Heart left ventricle (tissue), 16 donors: ENCODE measurements at regions of chr3 and their contacts with region 1.

Region 1: DNA sequence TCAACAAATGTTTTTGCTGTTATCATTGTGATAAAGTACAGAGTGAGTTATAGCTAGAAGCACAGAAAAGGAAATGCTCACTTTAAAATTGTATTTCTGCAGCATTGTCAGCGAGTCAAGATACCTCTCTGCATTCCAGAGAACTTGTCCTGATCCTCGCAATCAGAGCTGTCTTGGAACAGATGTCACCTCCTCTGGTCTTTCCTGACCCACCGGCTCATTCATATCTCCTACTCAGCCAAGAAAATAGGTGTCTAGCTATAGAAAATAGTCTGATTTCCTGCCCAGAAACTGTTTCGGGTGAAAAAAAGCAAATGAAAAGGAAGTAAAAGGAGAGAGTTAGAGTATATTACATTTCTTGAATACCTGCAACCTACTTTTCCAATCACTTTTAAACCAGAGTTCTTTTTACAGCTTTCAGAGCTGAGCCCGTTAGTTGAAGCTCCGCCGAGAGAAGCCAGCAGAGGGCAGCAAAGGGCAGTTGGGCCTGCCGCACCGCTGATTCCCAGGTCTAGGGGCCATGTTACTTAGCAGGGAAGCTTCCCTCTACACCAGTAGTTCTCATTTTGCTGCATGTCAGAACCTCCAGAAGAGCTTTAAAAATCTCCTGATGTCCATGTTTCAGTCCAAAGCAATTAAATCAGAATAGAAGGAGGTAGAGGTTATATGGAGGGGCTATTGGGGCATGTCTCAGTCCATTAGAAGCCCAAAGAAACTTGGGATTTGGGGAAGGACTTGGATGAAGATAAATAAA is 185.7 kb upstream of the THRB start:
- DNase-seq: peak; percentile 46 to 82 (median 54)
- ATAC-seq: peak; percentile 37 to 86 (median 67)
- H3K4me3 ChIP-seq: no peak overlapping the region
- H3K27ac ChIP-seq: no peak overlapping the region
- H3K4me1 ChIP-seq: peaks cover 0 to 8% (median 0%) of the 10 kb centered on the region in 12 donors
- H3K27me3 ChIP-seq: no peaks in the 10 kb centered on the region
- CTCF ChIP-seq: peak; percentile 70 to 92 (median 83)
- POLR2A ChIP-seq: no peak

Region 2: DNA sequence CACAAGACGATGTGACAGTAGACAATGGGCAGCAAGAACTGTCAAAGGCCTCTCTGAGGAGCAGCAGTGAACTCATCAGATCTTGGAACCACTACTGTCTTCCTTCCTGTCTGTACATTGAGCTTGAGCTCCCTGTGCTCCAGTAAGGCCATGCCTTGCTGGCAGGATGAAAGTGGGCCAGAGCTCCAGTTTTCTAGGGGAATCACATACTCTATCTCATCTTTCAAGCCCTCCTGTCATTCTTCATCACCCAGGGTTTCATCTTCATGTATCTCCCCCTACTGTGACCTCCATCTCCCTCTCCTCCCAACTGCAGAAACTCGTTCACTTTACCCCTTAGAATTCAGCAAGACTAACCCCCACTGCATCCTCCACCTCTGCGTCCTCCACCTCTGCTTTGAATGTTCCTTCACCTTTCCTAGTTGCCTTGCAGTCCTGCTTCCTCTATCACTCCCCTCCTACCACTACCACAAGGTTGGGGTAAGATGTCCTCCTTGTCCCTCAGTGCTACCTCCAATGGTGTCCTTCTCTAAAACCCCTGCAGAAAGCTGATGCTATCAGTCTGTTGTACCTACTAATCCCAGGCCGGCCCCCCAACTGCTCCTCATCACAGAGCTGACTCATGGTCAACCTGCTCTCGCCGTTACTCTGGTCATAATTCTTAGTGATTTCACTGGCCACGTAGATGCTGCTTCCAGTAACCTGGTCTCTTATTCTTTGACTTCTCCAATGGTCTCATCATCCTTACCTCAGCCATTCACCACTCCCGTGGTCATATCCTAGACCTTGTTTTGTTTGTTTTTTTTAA is 785.9 kb before region 1 on chr3:
- intact Hi-C with region 1: loop called in 2 of 10 experiments (anchors 5 to 10 kb)
- DNase-seq: no peak
- ATAC-seq: peak in 1 of 4 donors; percentile 30
- H3K4me3 ChIP-seq: no peak overlapping the region
- H3K27ac ChIP-seq: no peak overlapping the region
- H3K4me1 ChIP-seq: peaks cover 0 to 5% (median 0%) of the 10 kb centered on the region in 12 donors
- H3K27me3 ChIP-seq: no peaks in the 10 kb centered on the region
- CTCF ChIP-seq: no peak
- POLR2A ChIP-seq: no peak

Region 3: DNA sequence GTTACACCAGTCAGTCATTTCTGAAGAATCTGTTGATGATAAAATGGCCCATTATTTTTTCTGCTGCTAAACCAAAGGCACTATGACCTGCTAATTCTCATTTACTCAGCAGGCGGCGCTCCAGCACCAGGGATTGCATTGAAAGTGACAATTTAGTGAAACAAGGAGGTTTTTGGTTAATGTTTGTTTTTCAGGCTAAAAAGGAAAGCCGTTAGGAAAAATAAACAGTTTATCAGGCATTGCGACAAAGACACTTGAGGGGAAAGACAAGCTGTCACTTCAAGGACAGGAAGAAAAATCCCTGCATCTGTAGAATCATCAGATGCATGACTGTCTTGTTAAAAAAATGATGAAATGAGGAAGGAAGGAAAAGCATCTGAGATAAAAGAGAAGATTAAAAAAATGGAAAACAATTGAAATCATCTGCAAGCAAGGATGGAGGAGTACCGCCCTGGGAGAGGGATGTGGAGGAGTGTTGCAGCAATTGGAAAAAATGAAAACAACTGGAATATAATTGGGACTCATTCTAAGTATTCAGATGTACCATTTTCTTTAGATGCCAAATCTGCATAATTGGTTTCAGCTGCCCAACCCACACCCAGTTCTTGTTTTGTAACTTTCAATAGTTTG is 681.3 kb before region 1 on chr3:
- intact Hi-C with region 1: loop called (anchors 1 to 10 kb)
- DNase-seq: peak; percentile 48 to 77 (median 63)
- ATAC-seq: peak in 1 of 4 donors; percentile 30
- H3K4me3 ChIP-seq: no peak overlapping the region
- H3K27ac ChIP-seq: no peak overlapping the region
- H3K4me1 ChIP-seq: peaks cover 0 to 16% (median 7%) of the 10 kb centered on the region in 12 donors
- H3K27me3 ChIP-seq: no peaks in the 10 kb centered on the region
- CTCF ChIP-seq: peak; percentile 64 to 95 (median 88)
- POLR2A ChIP-seq: no peak

Region 4: GRCh38 chr3:24004171-24004938 is 676.0 kb before region 1 on chr3:
- intact Hi-C with region 1: loop called (anchors 1 to 10 kb)
- DNase-seq: no peak
- ATAC-seq: no peak
- H3K4me3 ChIP-seq: no peak overlapping the region
- H3K27ac ChIP-seq: no peak overlapping the region
- H3K4me1 ChIP-seq: peaks cover 0 to 3% (median 0%) of the 10 kb centered on the region in 12 donors
- H3K27me3 ChIP-seq: no peaks in the 10 kb centered on the region
- CTCF ChIP-seq: no peak
- POLR2A ChIP-seq: no peak

Region 5: DNA sequence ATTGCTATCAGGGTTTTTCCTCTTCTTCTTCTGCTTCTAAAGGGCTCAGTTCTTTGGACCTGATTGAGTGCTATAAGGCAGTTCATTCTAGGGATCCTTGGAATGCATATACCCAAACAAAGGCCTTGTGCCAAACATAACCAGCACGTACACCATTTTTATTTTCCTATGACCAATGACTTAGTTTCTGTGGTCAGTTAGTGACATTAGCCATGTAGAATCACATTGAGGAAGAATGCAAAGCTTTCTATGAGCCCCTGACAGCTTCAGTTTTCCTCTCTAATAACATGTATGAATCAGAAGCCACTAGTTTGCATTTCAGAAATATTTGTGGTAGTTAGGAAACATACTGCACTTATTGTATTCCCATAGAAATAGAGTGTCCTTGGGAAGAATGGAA is 425.7 kb before region 1 on chr3:
- intact Hi-C with region 1: loop called in 1 of 10 experiments (anchors 5 kb)
- DNase-seq: no peak
- ATAC-seq: no peak
- H3K4me3 ChIP-seq: no peak overlapping the region
- H3K27ac ChIP-seq: no peak overlapping the region
- H3K4me1 ChIP-seq: peaks cover 0 to 25% (median 12%) of the 10 kb centered on the region in 12 donors
- H3K27me3 ChIP-seq: no peaks in the 10 kb centered on the region
- CTCF ChIP-seq: no peak
- POLR2A ChIP-seq: no peak

Region 6: DNA sequence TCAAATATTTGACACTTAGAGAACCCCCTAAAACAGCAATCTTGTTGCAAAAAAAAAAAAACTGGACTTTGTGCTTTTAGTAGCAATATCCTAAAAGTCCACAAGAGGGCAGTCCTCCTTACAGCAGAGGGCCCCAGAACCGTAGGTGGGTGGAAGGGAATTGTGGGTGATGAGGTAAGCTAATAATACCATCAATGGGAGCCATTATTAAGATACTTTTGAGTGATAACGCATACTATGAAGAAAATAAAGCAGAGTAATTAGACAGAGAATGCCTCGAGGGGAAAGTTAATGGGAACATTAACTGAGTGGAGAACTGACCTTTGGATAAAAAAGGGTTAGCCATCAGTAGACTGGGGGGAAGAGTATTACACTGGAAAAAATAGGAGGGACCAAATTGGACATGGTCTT is 415.6 kb before region 1 on chr3:
- intact Hi-C with region 1: loop called in 3 of 10 experiments (anchors 5 to 10 kb)
- DNase-seq: no peak
- ATAC-seq: peak in 3 of 4 donors; percentile 50 to 63 (median 55)
- H3K4me3 ChIP-seq: no peak overlapping the region
- H3K27ac ChIP-seq: no peak overlapping the region
- H3K4me1 ChIP-seq: peaks cover 0 to 14% (median 5%) of the 10 kb centered on the region in 12 donors
- H3K27me3 ChIP-seq: no peaks in the 10 kb centered on the region
- CTCF ChIP-seq: peak; percentile 62 to 79 (median 71)
- POLR2A ChIP-seq: no peak